ENCODE measurements at regions of chr3 and their contacts with region 1.

Region 1: DNA sequence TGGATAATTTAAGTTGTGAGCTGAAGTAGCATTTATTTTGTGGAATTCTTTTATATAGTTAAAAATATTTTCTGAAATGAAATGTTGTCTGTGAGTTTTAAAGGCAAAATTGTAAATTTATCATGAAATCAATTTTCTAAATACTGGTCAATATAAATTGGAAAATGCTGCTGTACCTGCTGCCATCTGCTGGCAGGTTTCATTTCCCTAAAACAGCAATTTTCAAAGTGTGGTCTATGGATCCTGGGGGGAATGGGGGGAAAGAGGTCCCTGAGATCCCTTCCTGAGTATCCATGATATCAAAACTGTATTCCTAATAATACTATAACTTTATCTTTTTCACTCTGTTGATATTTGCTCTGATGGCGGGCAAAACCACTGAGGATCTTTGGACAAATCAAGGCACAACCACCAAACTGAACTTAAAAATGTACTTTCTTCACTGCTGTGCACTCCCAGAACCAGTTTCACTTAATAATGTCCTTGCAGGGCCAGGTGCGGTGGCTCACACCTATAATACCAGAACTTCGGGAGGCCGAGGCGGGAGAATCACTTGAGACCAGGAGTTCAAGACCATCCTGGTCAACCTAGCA is 17.2 kb upstream of the CCR4 start:
- DNase-seq: peak in 1 of 2 experiments; percentile 21
- ATAC-seq: peak in 1 of 2 experiments; percentile 67; a peak in 3 of 6 replicates
- H3K4me3 ChIP-seq: no peak overlapping the region
- H3K27ac ChIP-seq: no peak overlapping the region
- H3K4me1 ChIP-seq: no peaks in the 10 kb centered on the region
- CTCF ChIP-seq: peak; percentile 88
- EP300 ChIP-seq: no peak
- POLR2A ChIP-seq: no peak
- RAD21 ChIP-seq: peak; percentile 74 to 80; a peak in 4 of 5 replicates

Region 2: DNA sequence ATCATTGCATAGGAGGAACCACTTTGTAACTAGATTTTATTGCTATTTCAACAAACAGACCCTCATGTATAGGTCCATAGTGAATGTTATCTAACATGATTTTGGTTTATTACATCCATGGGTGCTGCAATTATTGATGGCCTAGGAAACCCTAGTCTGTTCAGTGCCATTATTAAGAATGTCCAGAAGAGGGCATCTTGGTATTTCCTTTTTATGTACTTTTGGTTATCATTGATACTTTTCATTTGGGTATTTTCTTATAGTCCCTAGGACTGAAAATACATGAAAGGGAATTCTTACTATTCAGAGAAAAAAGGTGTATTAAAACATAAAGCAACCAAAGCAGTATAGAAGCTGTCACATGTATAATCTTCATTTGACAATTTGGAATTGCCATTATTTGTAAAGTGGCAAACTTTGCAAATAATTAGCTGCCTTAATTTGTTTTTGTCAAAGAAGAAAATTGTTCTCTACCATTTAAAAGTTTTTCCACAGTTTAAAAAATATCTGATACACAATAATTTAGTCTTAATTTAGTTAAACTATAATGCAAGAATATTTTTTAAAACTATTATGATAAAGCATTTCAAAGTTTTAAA is 200.5 kb before region 1 on chr3:
- CTCF ChIA-PET with region 1: interaction called, 22 read pairs
- POLR2A ChIA-PET with region 1: no interaction called
- DNase-seq: peak; percentile 42 to 54
- ATAC-seq: peak in 1 of 2 experiments; percentile 75; a peak in 4 of 6 replicates
- H3K4me3 ChIP-seq: no peak overlapping the region
- H3K27ac ChIP-seq: no peak overlapping the region
- H3K4me1 ChIP-seq: no peaks in the 10 kb centered on the region
- CTCF ChIP-seq: peak; percentile 74
- EP300 ChIP-seq: no peak
- POLR2A ChIP-seq: no peak
- RAD21 ChIP-seq: peak; percentile 60 to 70; a peak in 4 of 5 replicates

Measured in A549 (cell line).